ENCODE measurements at regions of chr11 and their contacts with region 1.

Region 1: GRCh38 chr11:66883016-66883968 is 26.4 kb downstream of the LRFN4 start:
- DNase-seq: peak; percentile 85 to 89
- H3K4me3 ChIP-seq: peak overlapping the region; percentile 2; the same call in 1 of the 2 replicates
- H3K27ac ChIP-seq: peak overlapping the region; percentile 78
- H3K4me1 ChIP-seq: peaks cover 49% of the 10 kb centered on the region
- H3K27me3 ChIP-seq: no peaks in the 10 kb centered on the region
- CTCF ChIP-seq: peak; percentile 86

Region 2: GRCh38 chr11:66694732-66695207 is 188.5 kb before region 1 on chr11:
- CTCF ChIA-PET with region 1: no interaction called
- POLR2A ChIA-PET with region 1: no interaction called
- intact Hi-C with region 1: loop called (anchors 2 kb)
- DNase-seq: peak; percentile 94 to 96
- H3K4me3 ChIP-seq: no peak overlapping the region
- H3K27ac ChIP-seq: no peak overlapping the region
- H3K4me1 ChIP-seq: no peaks in the 10 kb centered on the region
- H3K27me3 ChIP-seq: no peaks in the 10 kb centered on the region
- CTCF ChIP-seq: peak; percentile 98

Region 3: DNA sequence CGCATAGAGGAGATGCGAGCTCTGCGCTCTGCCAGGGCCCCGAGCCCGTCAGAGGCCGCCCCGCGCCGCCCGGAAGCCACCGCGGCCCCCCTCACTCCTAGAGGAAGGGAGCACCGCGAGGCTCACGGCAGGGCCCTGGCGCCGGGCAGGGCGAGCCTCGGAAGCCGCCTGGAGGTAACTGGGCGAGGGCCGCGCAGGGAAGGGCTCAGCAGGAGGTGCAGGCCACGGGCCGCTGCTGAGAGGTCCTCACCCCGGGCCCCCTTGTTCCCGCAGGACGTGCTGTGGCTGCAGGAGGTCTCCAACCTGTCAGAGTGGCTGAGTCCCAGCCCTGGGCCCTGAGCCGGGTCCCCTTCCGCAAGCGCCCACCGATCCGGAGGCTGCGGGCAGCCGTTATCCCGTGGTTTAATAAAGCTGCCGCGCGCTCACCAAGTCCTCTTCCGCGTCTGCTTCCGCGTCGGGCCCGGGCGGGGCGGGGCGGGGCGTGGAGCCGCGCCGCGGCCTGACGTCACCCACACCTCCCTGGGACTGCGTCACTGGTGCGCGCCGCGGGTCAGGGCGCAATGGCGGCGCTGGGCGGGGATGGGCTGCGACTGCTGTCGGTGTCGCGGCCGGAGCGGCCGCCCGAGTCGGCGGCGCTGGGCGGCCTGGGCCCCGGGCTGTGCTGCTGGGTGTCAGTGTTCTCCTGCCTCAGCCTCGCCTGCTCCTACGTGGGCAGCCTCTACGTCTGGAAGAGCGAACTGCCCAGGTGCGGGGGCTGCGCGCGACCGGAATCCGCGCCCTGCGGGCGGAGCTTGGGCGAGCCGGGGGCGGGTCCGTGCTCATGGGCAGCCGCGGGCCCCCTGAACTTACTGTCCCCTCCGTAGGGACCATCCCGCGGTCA is 40.2 kb before region 1 on chr11 and contains the start of gene RCE1:
- CTCF ChIA-PET with region 1: no interaction called
- POLR2A ChIA-PET with region 1: interaction called, 3 read pairs
- intact Hi-C with region 1: loop called (anchors 1 kb)
- DNase-seq: peak; percentile 79 to 93
- H3K4me3 ChIP-seq: peak within 1 kb of the TSS; percentile 94
- H3K27ac ChIP-seq: peak within 1 kb of the TSS; percentile 67
- H3K4me1 ChIP-seq: peaks cover 52% of the 10 kb centered on the region
- H3K27me3 ChIP-seq: no peaks in the 10 kb centered on the region
- CTCF ChIP-seq: no peak
- total RNA-seq, gene RCE1: 42.1 and 42.9 TPM in 2 replicates

Region 4: GRCh38 chr11:66902486-66903177 is 19.3 kb after region 1 on chr11:
- CTCF ChIA-PET with region 1: interaction called, 3 read pairs
- POLR2A ChIA-PET with region 1: interaction called, 19 read pairs
- intact Hi-C with region 1: no loop called
- DNase-seq: no peak
- H3K4me3 ChIP-seq: no peak overlapping the region
- H3K27ac ChIP-seq: no peak overlapping the region
- H3K4me1 ChIP-seq: peaks cover 34% of the 10 kb centered on the region
- H3K27me3 ChIP-seq: no peaks in the 10 kb centered on the region
- CTCF ChIP-seq: no peak

Region 5: GRCh38 chr11:66970808-66971442 is 87.6 kb after region 1 on chr11:
- CTCF ChIA-PET with region 1: no interaction called
- POLR2A ChIA-PET with region 1: interaction called, 3 read pairs
- intact Hi-C with region 1: loop called (anchors 5 kb)
- DNase-seq: peak; percentile 72 to 99
- H3K4me3 ChIP-seq: peak overlapping the region; percentile 13; the same call in 1 of the 2 replicates
- H3K27ac ChIP-seq: peak overlapping the region; percentile 83
- H3K4me1 ChIP-seq: peaks cover 77% of the 10 kb centered on the region
- H3K27me3 ChIP-seq: no peaks in the 10 kb centered on the region
- CTCF ChIP-seq: no peak

Region 6: GRCh38 chr11:66987158-66987620 is 103.9 kb after region 1 on chr11:
- CTCF ChIA-PET with region 1: no interaction called
- POLR2A ChIA-PET with region 1: no interaction called
- intact Hi-C with region 1: no loop called
- DNase-seq: no peak
- H3K4me3 ChIP-seq: no peak overlapping the region
- H3K27ac ChIP-seq: no peak overlapping the region
- H3K4me1 ChIP-seq: peaks cover 18% of the 10 kb centered on the region
- H3K27me3 ChIP-seq: no peaks in the 10 kb centered on the region
- CTCF ChIP-seq: no peak